ENCODE measurements at regions of chr20 and their contacts with region 1.

Region 1: DNA sequence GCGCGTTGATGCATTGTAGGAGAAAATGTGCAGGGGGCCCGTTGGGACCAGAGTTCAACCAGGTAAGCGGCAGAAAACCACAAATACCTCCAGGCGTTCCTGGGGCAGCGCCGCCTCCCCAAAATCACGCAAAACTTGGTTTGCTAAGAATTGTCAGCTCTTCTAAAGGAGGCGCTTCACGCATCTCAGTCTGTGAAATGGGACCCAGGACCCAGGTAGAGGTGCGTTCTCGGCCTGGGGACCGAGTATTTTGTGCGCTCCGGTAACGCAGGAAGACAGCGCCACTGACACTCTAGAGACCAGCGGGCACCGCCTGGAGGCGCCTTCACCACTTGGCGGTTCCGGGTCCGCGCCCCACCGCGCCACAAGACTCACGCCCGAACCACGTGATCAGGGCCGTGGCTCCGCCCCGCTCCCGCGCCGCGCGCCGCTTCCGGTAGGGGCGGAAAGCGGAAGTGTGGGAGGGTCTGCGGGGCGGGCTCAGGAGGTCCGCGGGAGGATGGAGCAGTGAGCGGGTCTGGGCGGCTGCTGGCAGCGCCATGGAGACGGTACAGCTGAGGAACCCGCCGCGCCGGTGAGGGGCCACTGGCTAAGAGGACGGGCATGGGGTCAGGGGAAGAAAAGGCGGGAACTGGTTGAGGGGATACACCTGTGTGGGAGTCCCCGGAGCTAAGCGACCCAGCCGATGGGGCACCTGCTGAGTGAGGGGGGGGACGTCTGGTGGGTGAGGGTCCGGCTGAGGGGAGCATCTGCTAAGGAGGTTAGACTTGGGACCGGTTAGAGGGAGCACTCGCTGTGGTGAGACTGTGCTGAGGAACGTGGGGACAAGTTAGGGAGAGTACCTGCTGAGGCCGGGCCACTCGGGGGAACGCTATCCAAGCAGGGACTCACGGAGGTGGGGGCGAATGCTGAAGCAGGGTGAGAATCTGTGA is at the start of gene STK4:
- DNase-seq: peak; percentile 98
- ATAC-seq: peak; percentile 79
- H3K4me3 Mint-ChIP-seq: peak within 1 kb of the TSS; percentile 97
- H3K27ac Mint-ChIP-seq: peak within 1 kb of the TSS; percentile 95
- H3K4me1 Mint-ChIP-seq: peaks cover 53% of the 10 kb centered on the region
- H3K27me3 Mint-ChIP-seq: no peaks in the 10 kb centered on the region
- total RNA-seq, gene STK4: 205 to 229 TPM

Region 2: DNA sequence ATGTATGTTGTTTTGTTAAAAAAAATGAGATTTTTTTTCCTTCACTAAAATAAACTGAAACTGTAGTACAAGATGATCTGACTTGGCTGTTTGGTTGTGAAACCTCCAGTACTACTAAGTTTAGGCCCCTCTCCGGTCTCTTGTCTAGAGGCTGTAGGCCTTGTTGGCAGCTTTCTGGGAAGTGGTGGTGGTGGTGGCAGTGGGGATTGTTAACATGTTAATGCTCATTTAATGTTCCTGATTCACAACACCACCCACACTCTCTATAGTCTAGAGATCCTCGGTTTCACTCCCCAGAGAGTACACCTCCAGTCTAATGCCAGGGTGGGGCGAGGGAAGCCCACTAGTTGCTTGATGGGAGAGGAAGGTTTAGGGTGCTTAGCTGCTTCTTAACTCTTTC is 24.1 kb after region 1 on chr20:
- POLR2A ChIA-PET with region 1: interaction called, 18 read pairs
- DNase-seq: no peak
- ATAC-seq: peak; percentile 67
- H3K4me3 Mint-ChIP-seq: peak overlapping the region; percentile 77
- H3K27ac Mint-ChIP-seq: peak overlapping the region; percentile 87
- H3K4me1 Mint-ChIP-seq: peaks cover 54% of the 10 kb centered on the region
- H3K27me3 Mint-ChIP-seq: no peaks in the 10 kb centered on the region

Measured in activated naive CD8-positive, alpha-beta T cell treated with anti-CD3 and anti-CD28 coated beads, Interleukin-2, amount 10 ng/mL, durations not matched to agents 7 days and 5 days (primary cell).